Breast epithelium (tissue), 4 donors: ENCODE measurements at regions of chr14 and their contacts with region 1.

Region 1: DNA sequence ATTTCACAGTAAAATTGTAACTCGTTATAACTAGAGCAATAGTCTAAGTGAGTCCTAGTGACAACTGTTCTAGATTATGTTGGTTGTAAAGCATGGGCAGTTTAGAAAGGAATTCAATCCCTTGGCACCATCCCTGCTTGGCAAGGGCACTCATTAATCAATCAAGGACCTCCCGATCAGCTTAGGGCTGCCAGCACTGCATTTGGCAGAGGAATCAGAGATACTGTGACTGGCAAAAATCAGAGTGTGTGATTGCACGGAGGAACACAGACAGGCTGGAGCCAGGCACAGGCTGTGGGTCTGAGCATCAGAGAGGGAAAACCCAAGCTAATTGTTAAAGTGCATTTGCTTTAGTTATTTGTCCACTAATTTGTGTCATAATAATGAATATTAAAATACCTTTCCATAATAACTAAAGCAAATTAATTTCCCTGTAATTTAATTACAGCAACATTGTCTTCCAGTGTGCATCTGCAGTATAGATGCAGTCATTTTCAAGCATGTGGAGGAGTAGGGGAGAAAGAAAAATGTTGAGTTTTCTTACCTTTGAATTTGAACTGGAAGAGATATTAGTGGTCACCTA is 3.2 kb upstream of the EGLN3 start:
- DNase-seq: no peak
- H3K4me3 ChIP-seq: no peak overlapping the region
- H3K27ac ChIP-seq: no peak overlapping the region
- H3K4me1 ChIP-seq: no peaks in the 10 kb centered on the region
- H3K27me3 ChIP-seq: no peaks in the 10 kb centered on the region
- CTCF ChIP-seq: no peak
- POLR2A ChIP-seq: no peak

Region 2: DNA sequence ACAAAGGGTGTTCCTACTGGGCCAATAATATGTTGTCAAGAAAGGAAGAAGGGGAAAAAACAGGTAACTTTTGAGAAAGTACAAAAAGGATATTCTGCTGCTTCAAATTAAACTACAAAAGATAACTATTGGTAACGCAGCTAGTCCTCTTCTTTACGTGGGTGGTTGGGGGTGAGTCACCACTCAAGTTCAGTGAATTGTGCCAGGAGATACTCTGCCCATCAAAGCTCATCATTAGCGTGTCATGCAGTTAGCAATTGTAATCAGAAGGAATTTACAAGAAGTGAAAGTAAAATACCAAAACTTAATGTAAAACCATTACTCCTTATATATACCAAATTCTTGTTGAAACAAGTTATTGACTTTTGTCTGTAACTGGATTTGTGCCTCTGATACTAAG is 673.5 kb before region 1 on chr14:
- intact Hi-C with region 1: no loop called
- DNase-seq: no peak
- H3K4me3 ChIP-seq: no peak overlapping the region
- H3K27ac ChIP-seq: no peak overlapping the region
- H3K4me1 ChIP-seq: no peaks in the 10 kb centered on the region
- H3K27me3 ChIP-seq: no peaks in the 10 kb centered on the region
- CTCF ChIP-seq: no peak
- POLR2A ChIP-seq: no peak

Region 3: DNA sequence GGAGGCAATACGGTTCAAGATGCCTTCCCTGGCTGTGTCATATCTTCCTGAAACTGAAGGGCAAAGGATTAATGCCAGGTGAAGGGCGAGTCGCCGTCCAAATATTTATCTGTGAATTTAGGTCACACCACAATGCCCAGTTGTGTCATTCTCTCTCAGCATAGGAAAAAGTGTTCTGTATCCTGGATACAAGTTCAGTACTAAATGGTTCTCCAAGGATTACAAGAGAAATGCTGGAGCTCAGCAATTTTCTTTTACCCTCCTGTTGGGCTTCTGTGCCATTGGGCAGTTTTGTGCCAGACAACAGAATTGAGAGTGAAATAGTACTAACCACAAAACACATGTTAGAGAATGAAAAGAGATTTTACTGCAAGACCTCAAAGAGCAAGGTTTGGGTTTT is 497.1 kb before region 1 on chr14:
- intact Hi-C with region 1: no loop called
- DNase-seq: no peak
- H3K4me3 ChIP-seq: no peak overlapping the region
- H3K27ac ChIP-seq: no peak overlapping the region
- H3K4me1 ChIP-seq: no peaks in the 10 kb centered on the region
- H3K27me3 ChIP-seq: no peaks in the 10 kb centered on the region
- CTCF ChIP-seq: no peak
- POLR2A ChIP-seq: no peak

Region 4: GRCh38 chr14:33931439-33931838 is 22.7 kb before region 1 on chr14:
- intact Hi-C with region 1: loop called (anchors 1 kb)
- DNase-seq: no peak
- H3K4me3 ChIP-seq: no peak overlapping the region
- H3K27ac ChIP-seq: no peak overlapping the region
- H3K4me1 ChIP-seq: no peaks in the 10 kb centered on the region
- H3K27me3 ChIP-seq: no peaks in the 10 kb centered on the region
- CTCF ChIP-seq: no peak
- POLR2A ChIP-seq: no peak